ENCODE measurements at regions of chr18 and their contacts with region 1.

Region 1: GRCh38 chr18:3566851-3567250 is 116.9 kb downstream of the TGIF1 start:
- DNase-seq: no peak
- H3K4me3 ChIP-seq: no peak overlapping the region
- H3K27ac ChIP-seq: no peak overlapping the region
- H3K4me1 ChIP-seq: no peaks in the 10 kb centered on the region
- H3K27me3 ChIP-seq: no peaks in the 10 kb centered on the region
- CTCF ChIP-seq: no peak

Region 2: GRCh38 chr18:3612315-3612714 is 45.5 kb after region 1 on chr18:
- CTCF ChIA-PET with region 1: no interaction called
- POLR2A ChIA-PET with region 1: no interaction called
- intact Hi-C with region 1: no loop called
- DNase-seq: no peak
- H3K4me3 ChIP-seq: no peak overlapping the region
- H3K27ac ChIP-seq: peak overlapping the region; percentile 24
- H3K4me1 ChIP-seq: peaks cover 13% of the 10 kb centered on the region
- H3K27me3 ChIP-seq: no peaks in the 10 kb centered on the region
- CTCF ChIP-seq: no peak

Region 3: GRCh38 chr18:3658529-3658928 is 91.7 kb after region 1 on chr18:
- CTCF ChIA-PET with region 1: no interaction called
- POLR2A ChIA-PET with region 1: interaction called, 11 read pairs
- intact Hi-C with region 1: no loop called
- DNase-seq: no peak
- H3K4me3 ChIP-seq: no peak overlapping the region
- H3K27ac ChIP-seq: no peak overlapping the region
- H3K4me1 ChIP-seq: peaks cover 20% of the 10 kb centered on the region
- H3K27me3 ChIP-seq: no peaks in the 10 kb centered on the region
- CTCF ChIP-seq: no peak

Region 4: DNA sequence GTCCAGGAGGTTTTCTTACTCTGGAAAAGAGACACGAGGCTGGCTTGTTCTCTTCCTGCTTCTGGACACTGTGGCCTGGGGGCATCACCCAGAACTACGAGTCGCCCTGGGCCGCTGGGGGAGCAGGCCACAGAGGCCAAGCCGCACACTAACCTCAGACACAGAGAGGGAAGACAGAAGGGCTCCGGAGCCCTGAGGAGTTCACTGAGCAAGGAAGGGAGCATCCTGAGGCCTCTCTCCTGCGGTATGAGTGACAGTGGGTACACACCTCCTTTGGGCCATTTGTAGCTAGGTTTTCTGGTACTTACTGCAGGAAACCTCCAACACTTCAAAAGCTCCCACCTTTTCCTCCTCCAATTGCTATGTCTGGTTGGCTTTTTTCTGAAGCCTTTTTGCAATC is 394.1 kb after region 1 on chr18:
- CTCF ChIA-PET with region 1: no interaction called
- POLR2A ChIA-PET with region 1: no interaction called
- intact Hi-C with region 1: no loop called
- DNase-seq: no peak
- H3K4me3 ChIP-seq: no peak overlapping the region
- H3K27ac ChIP-seq: no peak overlapping the region
- H3K4me1 ChIP-seq: peaks cover 7% of the 10 kb centered on the region
- H3K27me3 ChIP-seq: no peaks in the 10 kb centered on the region
- CTCF ChIP-seq: no peak